Tibial artery (tissue), 4 donors: ENCODE measurements at regions of chr3 and their contacts with region 1.

Region 1: GRCh38 chr3:42547401-42547945 is 34.3 kb downstream of the SEC22C start:
- DNase-seq: peak; percentile 63 to 78
- H3K4me3 ChIP-seq: no peak overlapping the region
- H3K27ac ChIP-seq: peak overlapping the region; percentile 83 to 84
- H3K4me1 ChIP-seq: peaks cover 0 to 60% (median 45%) of the 10 kb centered on the region in 4 donors
- H3K27me3 ChIP-seq: no peaks in the 10 kb centered on the region
- CTCF ChIP-seq: peak; percentile 87 to 94

Region 2: DNA sequence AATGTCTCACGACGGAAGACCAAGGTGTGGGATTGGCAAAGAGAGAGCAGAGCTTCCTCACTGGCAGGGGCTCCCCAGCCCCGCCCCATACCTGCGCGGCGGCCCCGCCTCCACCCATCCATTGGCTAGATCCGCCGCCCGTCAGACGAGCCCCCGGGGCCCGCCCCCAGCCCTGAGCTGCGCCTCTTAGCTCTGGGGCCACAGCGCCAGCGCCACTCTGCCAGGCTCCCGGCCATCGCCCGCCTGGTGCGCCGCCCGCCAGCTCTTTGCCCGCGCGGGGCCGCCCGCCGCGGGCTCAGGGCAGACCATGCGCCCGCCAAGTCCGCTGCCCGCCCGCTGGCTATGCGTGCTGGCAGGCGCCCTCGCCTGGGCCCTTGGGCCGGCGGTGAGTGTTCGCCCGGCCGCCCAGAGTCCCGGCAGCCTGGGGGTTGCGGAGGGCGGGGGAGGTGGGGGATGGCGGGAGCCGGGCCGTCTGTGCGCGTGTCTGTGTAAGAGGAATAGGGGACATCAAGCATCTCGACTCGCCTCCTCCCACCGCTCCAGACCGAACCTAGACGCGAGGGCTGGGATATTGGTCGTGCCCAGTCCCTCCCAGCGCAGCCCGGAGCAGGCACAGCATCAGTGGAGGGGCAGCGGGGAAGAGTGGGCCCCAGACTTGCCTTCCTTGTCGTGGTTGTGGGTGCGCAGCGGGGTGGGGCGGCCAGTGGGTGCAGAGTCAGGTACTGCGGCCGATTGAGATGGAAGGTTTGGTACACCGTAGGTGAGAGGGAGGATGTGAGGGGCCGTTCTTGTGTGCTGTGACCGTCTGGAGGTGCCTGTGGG is 44.8 kb before region 1 on chr3 and contains the start of gene VIPR1:
- intact Hi-C with region 1: loop called (anchors 5 kb)
- DNase-seq: peak; percentile 67 to 89
- H3K4me3 ChIP-seq: peak within 1 kb of the TSS; percentile 51 to 68
- H3K27ac ChIP-seq: peak within 1 kb of the TSS; percentile 59 to 79
- H3K4me1 ChIP-seq: peaks cover 0 to 23% (median 20%) of the 10 kb centered on the region in 4 donors
- H3K27me3 ChIP-seq: no peaks in the 10 kb centered on the region
- CTCF ChIP-seq: no peak